ENCODE measurements at regions of chr16 and their contacts with region 1.

Region 1: GRCh38 chr16:20849587-20850390 is 43.5 kb downstream of the REXO5 start:
- DNase-seq: peak; percentile 26 to 66
- ATAC-seq: peak; percentile 65 to 67; a peak in 4 of 6 replicates
- H3K4me3 ChIP-seq: no peak overlapping the region
- H3K27ac ChIP-seq: peak overlapping the region; percentile 35 to 78; a peak in 2 of 6 replicates
- H3K4me1 ChIP-seq: peaks cover 49% of the 10 kb centered on the region
- CTCF ChIP-seq: peak; percentile 95
- EP300 ChIP-seq: no peak
- POLR2A ChIP-seq: no peak
- RAD21 ChIP-seq: peak; percentile 97 to 98

Region 2: GRCh38 chr16:20568404-20568803 is 281.4 kb before region 1 on chr16:
- CTCF ChIA-PET with region 1: no interaction called
- POLR2A ChIA-PET with region 1: no interaction called
- DNase-seq: no peak
- ATAC-seq: no peak
- H3K4me3 ChIP-seq: no peak overlapping the region
- H3K27ac ChIP-seq: no peak overlapping the region
- H3K4me1 ChIP-seq: no peaks in the 10 kb centered on the region
- CTCF ChIP-seq: no peak
- EP300 ChIP-seq: no peak
- POLR2A ChIP-seq: no peak
- RAD21 ChIP-seq: no peak

Region 3: DNA sequence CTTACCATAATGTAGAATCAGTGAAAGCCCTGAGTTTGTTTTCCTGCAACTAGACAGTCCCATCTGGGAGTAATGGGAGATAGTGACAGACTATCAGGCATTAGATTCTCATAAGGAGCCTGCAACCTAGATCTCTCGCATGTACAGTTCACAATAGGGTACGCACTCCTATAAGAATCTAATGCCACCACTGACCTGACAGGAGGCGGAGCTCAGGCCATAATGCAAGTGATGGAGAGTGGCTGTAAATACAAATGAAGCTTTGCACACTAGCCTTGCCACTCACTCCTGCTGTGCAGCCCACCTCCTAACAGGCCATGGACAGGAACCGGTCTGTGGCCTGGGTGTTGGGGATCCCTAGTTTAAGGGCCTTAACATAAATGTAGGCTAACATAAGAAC is 129.5 kb before region 1 on chr16:
- CTCF ChIA-PET with region 1: no interaction called
- POLR2A ChIA-PET with region 1: no interaction called
- DNase-seq: no peak
- ATAC-seq: no peak
- H3K4me3 ChIP-seq: no peak overlapping the region
- H3K27ac ChIP-seq: no peak overlapping the region
- H3K4me1 ChIP-seq: no peaks in the 10 kb centered on the region
- CTCF ChIP-seq: no peak
- EP300 ChIP-seq: no peak
- POLR2A ChIP-seq: no peak
- RAD21 ChIP-seq: no peak

Region 4: DNA sequence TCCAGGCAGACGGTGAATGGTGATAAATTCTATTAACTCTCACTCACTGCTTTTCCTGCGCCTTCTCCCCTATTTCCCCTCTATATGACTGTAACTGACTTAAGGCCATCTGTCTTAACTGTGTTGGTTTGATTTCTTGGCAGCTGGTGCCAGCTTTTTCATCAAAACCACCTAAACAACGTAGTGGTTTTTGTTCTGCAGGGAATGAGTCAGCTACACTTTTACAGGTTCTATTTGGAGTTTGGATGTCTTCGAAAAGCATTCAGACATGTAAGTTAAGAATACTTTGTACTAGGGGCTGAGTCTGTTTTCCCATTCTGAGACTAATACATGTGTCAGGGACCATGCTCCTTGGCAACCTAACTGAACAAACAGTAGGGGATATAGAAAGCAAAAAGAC is 35.0 kb before region 1 on chr16:
- CTCF ChIA-PET with region 1: interaction called, 12 read pairs
- POLR2A ChIA-PET with region 1: no interaction called
- DNase-seq: no peak
- ATAC-seq: no peak
- H3K4me3 ChIP-seq: no peak overlapping the region
- H3K27ac ChIP-seq: no peak overlapping the region
- H3K4me1 ChIP-seq: no peaks in the 10 kb centered on the region
- CTCF ChIP-seq: no peak
- EP300 ChIP-seq: no peak
- POLR2A ChIP-seq: no peak
- RAD21 ChIP-seq: no peak

Region 5: GRCh38 chr16:20878682-20879147 is 28.9 kb after region 1 on chr16:
- CTCF ChIA-PET with region 1: interaction called, 49 read pairs
- POLR2A ChIA-PET with region 1: no interaction called
- DNase-seq: no peak
- ATAC-seq: peak in 1 of 2 experiments; percentile 12; a peak in 3 of 6 replicates
- H3K4me3 ChIP-seq: no peak overlapping the region; the same call in 2 of the 3 replicates
- H3K27ac ChIP-seq: peak overlapping the region; percentile 55 to 80
- H3K4me1 ChIP-seq: peaks cover 62% of the 10 kb centered on the region
- CTCF ChIP-seq: no peak
- EP300 ChIP-seq: no peak
- POLR2A ChIP-seq: no peak
- RAD21 ChIP-seq: no peak

Region 6: DNA sequence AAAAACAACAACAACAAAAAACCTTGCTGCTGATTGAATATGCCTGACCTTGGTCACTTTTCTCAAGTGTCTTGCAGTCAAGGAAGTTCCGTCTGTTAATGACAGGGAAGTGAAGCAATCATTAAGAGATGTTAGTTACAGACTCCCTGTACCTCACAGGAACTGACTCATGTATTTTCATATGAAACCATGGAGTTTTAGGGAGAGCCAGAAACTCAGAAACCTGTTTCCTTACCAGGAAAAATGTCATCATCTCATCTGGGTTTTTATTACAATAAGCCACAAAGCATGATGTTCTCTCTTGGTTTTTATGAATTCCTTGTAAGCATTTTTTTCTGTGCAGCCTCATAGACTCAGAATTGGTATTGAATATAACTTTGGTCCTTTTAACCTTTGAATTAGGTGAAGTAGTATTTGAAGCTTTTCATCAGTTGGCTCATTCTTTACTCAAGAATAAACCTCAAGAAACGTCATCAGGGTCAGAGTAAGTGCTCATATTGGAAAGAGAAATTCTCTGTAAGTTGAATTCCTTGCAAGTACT is 61.1 kb after region 1 on chr16:
- CTCF ChIA-PET with region 1: interaction called, 10 read pairs
- POLR2A ChIA-PET with region 1: interaction called, 4 read pairs
- DNase-seq: peak in 1 of 2 experiments; percentile 57
- ATAC-seq: peak; percentile 52 to 71; a peak in 5 of 6 replicates
- H3K4me3 ChIP-seq: no peak overlapping the region
- H3K27ac ChIP-seq: peak overlapping the region; percentile 67 to 71
- H3K4me1 ChIP-seq: peaks cover 45% of the 10 kb centered on the region
- CTCF ChIP-seq: no peak
- EP300 ChIP-seq: no peak
- POLR2A ChIP-seq: no peak
- RAD21 ChIP-seq: no peak

Region 7: DNA sequence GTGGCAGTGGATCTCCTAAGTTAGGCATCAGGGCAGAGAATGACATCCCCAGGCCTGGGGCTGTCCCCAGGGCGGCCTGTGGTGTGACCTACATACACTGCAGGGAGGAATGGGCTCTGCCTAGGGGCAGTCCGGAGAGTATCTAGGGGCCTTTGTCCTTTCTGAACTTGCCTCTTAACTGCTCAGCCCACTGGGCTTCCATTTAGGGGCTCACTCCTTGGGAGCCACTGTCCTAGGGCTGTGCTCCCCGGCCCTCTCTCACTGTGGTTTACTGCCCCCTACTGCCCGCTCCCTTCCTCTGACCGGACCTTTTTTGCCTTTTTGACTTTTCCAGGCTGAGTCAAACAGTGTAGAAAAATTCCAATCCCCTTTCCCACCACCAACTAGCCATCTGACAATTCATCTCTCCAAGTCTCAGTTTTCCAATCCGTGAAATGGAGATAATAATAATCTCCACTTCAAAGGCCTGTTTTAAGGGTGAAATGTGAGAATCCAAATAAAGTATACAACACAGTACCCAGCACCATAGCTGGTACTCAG is 234.0 kb after region 1 on chr16:
- CTCF ChIA-PET with region 1: interaction called, 41 read pairs
- POLR2A ChIA-PET with region 1: no interaction called
- DNase-seq: peak; percentile 25 to 52
- ATAC-seq: peak; percentile 93 to 97
- H3K4me3 ChIP-seq: no peak overlapping the region
- H3K27ac ChIP-seq: 0 out of 6 replicates have a peak overlapping the region, but pooled peaks of 1 of the 2 experiments have one; percentile 41
- H3K4me1 ChIP-seq: no peaks in the 10 kb centered on the region
- CTCF ChIP-seq: peak; percentile 75
- EP300 ChIP-seq: no peak
- POLR2A ChIP-seq: no peak
- RAD21 ChIP-seq: peak; percentile 88 to 90

Region 8: DNA sequence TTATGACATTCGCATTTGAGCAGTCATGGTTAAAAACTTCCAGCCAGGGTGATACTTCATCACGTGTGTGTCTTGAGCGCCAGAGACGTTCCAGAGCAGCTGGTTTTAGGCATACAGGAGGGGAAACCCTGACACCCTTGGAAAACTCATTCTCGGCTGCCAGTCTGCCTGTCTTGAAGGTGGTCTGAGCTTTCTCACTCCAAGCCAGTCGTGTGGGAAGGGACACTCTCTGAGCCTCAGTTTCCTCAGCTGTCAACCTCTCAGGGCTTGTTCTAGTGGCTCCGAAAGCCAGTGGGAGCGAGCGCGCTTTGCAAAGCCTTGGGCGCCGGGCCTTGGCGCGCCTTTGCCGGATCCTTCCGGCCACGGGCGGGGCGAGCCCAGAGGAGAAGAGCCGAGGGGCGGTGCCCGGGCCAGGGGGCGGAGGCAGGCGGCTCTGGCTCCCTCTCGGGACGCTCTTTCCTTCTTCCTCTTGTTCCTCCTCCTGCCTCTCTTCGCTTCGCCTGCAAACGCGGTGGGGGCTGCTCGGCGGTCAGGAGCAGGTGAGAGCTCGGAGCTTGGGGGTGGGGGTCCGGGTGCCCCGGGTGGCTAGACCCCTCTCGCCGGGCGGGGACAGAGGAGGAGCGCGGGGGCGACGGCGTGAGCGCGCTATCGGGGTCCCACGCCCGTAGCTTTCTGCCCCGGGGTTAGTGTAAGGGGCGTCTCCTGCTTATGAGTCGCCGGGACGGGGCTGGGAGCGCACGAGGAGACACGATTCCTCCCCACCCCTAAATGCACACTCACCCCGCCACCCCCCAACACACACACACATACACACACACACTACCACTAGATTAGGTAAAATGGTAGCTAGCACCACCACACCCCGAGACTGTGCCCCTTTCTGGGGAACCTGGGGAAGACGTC is 308.7 kb after region 1 on chr16 and contains the start of gene LDAF1:
- CTCF ChIA-PET with region 1: interaction called, 28 read pairs
- POLR2A ChIA-PET with region 1: interaction called, 3 read pairs
- DNase-seq: peak; percentile 64 to 75
- ATAC-seq: peak; percentile 97 to 99
- H3K4me3 ChIP-seq: peak within 1 kb of the TSS; percentile 83
- H3K27ac ChIP-seq: peak within 1 kb of the TSS; percentile 84 to 95
- H3K4me1 ChIP-seq: peaks cover 25% of the 10 kb centered on the region; the same call in 2 of the 3 replicates
- CTCF ChIP-seq: no peak
- EP300 ChIP-seq: no peak
- POLR2A ChIP-seq: no peak; the same call in 1 of the 2 replicates
- RAD21 ChIP-seq: no peak; a peak in 1 of 5 replicates
- polyA plus RNA-seq, gene LDAF1: 14.4 and 16.2 TPM in 2 replicates